Head of caudate nucleus (tissue), 42 donors: ENCODE measurements at regions of chr4 and their contacts with region 1.

Region 1: GRCh38 chr4:159175085-159175988 is 72.5 kb downstream of the RAPGEF2 start:
- DNase-seq: peak; percentile 27 to 90 (median 72)

Region 2: DNA sequence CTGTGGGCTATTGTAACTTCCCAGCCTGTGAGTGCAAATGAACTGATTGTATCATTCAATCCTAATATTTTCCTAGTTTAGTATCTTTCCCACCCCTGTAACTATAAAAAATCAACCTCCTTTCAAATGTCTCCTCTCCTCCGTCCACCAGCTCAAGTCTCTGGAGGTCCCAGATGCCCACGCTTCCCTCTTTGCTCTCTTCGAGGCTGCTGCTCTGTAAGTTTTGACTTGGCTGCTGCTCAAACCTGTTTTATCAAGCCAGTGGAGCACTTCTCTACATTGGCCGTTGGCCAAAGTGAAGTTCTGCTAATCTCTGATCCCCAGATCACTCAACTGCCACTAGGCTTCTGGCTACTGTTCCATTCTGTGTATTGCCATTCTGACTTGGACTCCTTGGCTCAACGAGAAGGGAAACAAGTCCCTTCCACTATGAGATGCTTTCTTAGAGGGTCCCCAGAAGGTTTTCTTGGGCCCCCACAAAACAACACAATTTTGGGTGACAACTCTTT is 133.2 kb before region 1 on chr4:
- intact Hi-C with region 1: no loop called
- DNase-seq: peak in 4 of 42 donors; percentile 13 to 37 (median 26)

Region 3: GRCh38 chr4:159102622-159103383 is 72.5 kb before region 1 on chr4 and contains the start of gene RAPGEF2:
- intact Hi-C with region 1: loop called (anchors 5 kb)
- DNase-seq: peak; percentile 77 to 97 (median 92)

Region 4: DNA sequence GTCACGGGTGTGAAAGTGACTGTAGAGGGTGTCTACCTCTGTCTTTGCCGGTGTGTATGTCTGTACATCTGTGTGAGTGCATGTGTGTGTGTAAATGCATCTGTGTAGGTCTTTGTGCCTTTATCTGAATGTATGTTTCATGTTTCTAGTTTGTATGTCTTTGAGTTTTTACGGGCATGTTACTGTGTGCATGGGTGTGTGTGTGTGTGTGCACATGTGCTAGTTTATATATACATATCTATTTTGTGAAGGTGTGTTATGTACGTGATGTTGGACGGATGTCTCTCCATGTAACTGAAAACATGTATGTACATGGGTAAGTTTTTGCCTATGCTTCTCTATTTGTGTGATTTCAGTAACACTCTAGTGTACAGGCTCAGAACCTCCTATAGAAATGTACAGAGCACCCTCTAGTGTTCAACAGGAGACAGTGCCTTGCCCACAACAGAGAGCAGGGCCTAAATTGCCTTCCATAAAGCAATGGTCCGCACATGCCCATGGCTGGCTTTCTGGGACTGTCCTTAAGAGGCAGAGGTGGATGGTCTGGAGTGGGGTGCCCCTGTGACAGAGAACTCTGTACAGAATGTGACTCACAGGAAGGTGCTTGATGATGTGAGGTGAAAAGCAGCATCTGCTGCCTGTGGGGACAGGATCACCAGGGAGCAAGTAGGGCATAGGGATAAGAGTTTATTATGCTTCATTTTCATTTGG is 271.1 kb after region 1 on chr4:
- intact Hi-C with region 1: loop called (anchors 10 kb)
- DNase-seq: peak in 39 of 42 donors; percentile 6 to 78 (median 44)